GM23248 (cell line): ENCODE measurements at regions of chr9 and their contacts with region 1.

Region 1: GRCh38 chr9:124708633-124709291 is 62.3 kb downstream of the NR6A1 start:
- DNase-seq: peak; percentile 64
- H3K4me3 ChIP-seq: no peak overlapping the region
- H3K27ac ChIP-seq: peak overlapping the region; percentile 23; the same call in 1 of the 2 replicates
- H3K4me1 ChIP-seq: peaks cover 25% of the 10 kb centered on the region
- H3K27me3 ChIP-seq: no peaks in the 10 kb centered on the region

Region 2: DNA sequence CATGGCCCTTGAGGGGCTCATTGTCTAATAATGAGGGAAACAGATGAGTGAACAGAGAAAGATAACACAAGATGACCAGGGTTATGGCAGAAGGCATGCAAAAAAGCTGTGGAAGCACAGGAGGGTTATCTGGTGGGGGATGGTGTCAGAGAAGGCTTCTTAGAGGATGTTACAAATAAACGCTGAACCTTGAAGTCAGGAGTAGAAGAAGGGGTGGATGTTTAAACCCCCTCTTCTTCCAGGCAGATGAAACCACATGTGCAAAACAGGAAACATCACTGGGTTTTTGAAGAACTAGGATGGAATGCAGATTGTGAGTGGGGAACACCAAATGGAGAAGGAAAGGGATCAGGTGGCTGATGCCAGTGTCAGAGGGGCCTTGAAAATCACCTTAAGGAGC is 159.7 kb before region 1 on chr9:
- in situ Hi-C with region 1: loop called (anchors 10 kb)
- DNase-seq: no peak
- H3K4me3 ChIP-seq: no peak overlapping the region
- H3K27ac ChIP-seq: no peak overlapping the region
- H3K4me1 ChIP-seq: peaks cover 29% of the 10 kb centered on the region
- H3K27me3 ChIP-seq: no peaks in the 10 kb centered on the region

Region 3: DNA sequence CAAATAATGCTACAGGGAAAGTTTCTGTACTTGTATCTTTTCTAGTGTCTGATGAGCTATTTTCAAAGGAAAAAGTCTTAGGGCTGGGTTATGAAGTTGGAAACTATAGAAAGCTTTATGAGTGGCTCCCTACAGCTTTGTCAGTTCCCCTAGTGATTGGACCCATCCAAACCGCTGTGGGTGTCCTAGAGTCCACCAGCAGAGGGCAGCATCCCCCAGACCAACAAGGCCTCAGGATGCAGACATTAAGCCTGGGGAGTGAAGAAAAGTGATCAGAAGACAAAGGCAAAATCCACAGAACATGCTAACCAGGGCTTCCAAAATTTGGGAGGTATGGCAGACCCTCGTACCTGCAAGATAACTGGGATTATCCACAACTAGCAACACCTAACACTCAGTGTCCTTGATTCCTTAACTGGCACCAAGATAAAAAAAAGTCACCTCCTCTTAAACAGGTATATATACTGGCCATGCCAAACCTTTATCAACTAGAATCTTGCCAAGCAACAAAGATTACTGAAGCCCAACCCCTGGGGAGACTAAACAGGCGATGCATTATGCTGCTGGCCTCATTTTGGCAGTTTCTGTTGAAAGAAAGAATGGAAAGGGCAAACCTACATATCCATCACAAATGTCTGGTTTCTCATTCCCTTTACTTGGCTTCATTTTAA is 91.2 kb before region 1 on chr9:
- in situ Hi-C with region 1: loop called (anchors 5 kb)
- DNase-seq: peak; percentile 81
- H3K4me3 ChIP-seq: no peak overlapping the region
- H3K27ac ChIP-seq: no peak overlapping the region
- H3K4me1 ChIP-seq: peaks cover 28% of the 10 kb centered on the region
- H3K27me3 ChIP-seq: no peaks in the 10 kb centered on the region

Region 4: DNA sequence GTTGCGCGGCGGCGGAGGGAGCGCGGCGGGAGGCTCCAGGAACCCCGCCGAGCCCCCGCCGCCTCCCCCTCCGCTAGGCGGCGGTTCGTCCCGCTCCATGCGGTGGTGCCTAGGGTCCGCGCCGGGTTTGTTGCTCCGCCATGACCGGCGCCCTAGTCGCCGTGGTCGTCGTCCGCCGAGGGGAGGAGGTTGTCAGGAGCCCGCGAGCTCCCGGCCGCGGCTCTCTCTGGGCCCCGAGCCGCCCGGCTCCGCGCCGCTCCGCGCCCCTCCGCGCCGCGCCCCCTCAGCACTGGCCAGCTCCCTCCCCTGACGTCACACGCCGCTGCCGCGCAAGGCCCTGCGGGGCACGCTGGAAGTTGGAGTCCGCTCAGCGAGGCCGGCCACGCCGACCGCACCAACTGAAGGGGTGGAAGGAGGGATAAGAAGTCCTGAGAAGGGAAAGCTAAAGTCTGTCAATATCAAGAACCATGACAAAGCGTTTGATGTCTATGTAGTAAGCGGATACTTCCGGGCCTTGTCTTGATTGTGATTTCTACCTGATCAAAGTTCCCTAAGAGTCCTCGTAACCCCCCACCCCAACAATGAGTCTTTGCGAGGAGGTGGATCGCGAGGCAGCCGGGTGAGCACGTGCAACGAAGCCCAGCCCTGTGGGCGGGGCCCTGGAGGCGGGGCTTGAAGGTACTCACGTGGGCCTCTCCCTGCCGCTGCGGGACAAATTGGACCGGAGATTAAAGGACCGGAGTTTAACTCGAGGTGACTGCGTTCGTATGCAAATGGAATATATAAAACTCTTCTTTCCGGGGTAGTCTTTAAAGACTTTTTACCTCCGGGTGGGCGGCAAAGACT is 62.5 kb after region 1 on chr9 and contains the start of gene NR6A1:
- in situ Hi-C with region 1: no loop called
- DNase-seq: peak; percentile 98
- H3K4me3 ChIP-seq: peak within 1 kb of the TSS; percentile 79
- H3K27ac ChIP-seq: peak within 1 kb of the TSS; percentile 43
- H3K4me1 ChIP-seq: no peaks in the 10 kb centered on the region
- H3K27me3 ChIP-seq: peaks cover 42% of the 10 kb centered on the region
- total RNA-seq, gene NR6A1: not detected in 2 replicates

Region 5: GRCh38 chr9:125241000-125241862 is 532.5 kb after region 1 on chr9 and contains the start of gene HSPA5:
- in situ Hi-C with region 1: no loop called
- DNase-seq: peak; percentile 99
- H3K4me3 ChIP-seq: peak within 1 kb of the TSS; percentile 93
- H3K27ac ChIP-seq: peak within 1 kb of the TSS; percentile 97
- H3K4me1 ChIP-seq: peaks cover 52% of the 10 kb centered on the region
- H3K27me3 ChIP-seq: no peaks in the 10 kb centered on the region
- total RNA-seq, gene HSPA5: 70.4 and 76.5 TPM in 2 replicates